Right ventricle myocardium superior (tissue), 1 donor: ENCODE measurements at regions of chr19 and their contacts with region 1.

Region 1: DNA sequence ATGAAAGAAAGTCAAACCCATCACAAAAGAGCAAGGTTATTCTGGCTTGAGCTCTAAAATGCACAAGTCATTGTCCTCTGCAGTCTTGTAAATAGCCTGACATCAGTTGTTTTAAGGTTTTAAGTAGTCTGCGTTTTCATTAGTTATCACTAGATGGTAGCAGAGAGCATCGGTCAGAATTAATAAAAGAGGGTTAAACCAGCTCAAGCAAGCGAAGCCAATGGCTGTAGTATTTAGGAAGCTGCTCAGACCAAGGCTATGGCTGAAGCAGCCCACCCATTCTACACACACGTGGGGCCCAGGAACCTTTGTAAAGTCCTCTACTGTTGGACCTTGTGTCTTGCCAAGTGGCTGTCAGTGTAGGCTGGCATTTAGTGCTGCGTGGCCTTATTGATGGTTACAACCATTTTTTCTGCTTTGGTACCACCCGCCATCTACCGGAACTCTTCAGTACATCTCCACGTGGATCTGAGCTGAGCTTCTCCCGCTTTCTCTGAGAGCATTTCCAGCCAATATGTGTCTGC is 13.3 kb upstream of the ZNF57 start:
- DNase-seq: no peak
- ATAC-seq: peak; percentile 81

Region 2: GRCh38 chr19:2602391-2603181 is 284.9 kb before region 1 on chr19:
- intact Hi-C with region 1: no loop called
- DNase-seq: peak; percentile 91
- ATAC-seq: peak; percentile 86

Region 3: GRCh38 chr19:2663920-2664571 is 223.4 kb before region 1 on chr19:
- intact Hi-C with region 1: no loop called
- DNase-seq: peak; percentile 87
- ATAC-seq: peak; percentile 92

Region 4: DNA sequence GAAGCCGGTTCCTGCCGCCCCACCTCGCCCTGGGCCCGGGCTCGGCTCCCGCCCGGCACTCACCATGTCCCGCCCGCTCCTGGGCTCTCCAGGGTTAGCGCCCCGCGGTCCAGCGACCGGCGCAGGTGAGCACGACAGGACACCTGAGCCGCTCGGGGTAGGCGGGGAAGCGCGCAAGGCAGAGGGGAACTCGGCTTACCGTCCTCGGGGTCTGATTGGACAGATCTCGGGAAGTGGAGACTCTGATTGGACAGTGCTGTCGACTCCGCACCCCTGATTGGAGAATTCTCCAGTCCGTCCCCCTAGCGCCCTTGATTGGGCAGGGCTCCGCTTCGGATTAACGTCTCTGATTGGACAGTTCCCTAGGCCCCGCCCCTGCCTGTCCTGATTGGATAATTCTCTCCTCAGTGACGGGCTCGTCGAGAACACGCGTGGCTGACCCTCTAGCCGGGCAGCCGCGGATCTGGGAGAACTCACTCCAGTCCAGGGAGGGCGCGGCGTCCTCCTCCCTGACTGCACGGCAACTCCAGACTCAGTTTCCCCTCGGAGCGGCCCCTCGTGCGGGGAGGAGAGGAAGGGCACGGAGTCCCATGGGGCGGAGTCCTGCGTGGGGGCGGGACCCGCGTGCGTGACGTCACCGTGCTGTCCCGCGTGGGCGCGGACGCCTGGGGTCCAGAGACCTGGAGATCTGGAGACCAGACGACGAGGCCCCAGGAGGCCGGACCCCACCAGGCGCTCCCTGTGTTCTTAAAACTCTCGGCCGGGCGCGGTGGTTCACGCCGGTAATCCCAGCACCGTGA is 57.5 kb after region 1 on chr19 and contains the start of gene ZNF77:
- intact Hi-C with region 1: loop called (anchors 10 kb)
- DNase-seq: peak; percentile 99
- ATAC-seq: peak; percentile 97
- total RNA-seq, gene ZNF77: 2.1 TPM

Region 5: DNA sequence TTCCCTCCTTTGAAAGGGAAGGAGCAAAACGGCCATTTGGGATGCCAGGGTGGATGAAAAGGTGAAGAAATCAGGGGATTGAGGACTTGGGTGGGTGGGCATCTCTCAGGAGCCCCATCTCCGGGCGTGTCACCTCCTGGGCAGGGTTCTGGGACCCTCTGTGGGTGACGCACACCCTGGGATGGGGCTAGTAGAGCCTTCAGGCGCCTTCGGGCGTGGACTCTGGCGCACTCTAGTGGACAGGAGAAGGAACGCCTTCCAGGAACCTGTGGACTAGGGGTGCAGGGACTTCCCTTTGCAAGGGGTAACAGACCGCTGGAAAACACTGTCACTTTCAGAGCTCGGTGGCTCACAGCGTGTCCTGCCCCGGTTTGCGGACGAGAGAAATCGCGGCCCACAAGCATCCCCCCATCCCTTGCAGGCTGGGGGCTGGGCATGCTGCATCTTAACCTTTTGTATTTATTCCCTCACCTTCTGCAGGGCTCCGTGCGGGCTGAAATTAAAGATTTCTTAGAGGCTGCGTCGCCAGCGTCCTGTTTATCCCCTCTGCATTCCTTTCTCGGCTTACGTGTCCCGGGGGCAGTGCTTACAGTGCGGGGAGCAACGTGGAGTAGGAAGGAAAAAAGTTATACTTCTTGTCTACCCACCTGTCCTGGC is 275.9 kb after region 1 on chr19:
- intact Hi-C with region 1: loop called (anchors 10 kb)
- DNase-seq: peak; percentile 80
- ATAC-seq: peak; percentile 91